ENCODE measurements at regions of chr6 and their contacts with region 1.

Region 1: DNA sequence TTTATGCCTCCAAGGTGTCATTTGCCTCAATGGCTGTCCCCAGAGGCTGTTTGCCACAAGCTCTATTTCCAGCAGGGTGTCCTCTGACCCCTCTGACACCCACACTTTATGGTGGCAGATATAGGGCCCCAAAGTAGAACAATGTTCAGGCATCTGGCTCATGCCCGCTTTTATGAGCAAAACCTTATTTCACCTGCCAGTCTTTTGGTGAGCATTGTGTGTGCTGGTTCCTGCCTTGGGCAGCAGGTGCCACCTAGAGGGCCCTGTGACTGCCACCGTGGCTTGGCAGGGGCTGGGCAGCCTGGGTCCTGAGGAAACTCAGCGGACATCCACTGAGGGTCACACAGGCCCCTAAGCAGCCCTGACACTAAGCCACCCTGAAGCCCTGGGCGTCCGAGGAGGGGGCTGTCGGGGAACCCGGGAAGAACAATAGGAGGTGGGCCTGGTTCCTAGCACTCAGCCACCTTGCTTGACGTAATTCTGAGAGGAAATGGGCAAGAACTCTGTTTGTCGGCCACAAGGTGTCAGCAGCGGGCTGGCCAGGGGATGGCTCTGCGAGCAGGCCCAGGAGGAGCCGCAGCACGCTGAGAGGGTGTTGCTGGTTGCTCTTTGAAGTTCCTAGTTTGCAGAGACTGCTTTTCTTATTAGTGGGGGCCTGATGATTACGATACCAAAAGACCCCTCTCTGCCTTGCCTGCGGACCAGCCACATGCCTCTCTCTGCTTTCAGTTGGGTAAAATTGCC is 148.9 kb downstream of the SCML4 start:
- DNase-seq: peak; percentile 45
- ATAC-seq: peak; percentile 96
- H3K4me3 ChIP-seq: no peak overlapping the region; the same call in 1 of the 2 replicates
- H3K27ac ChIP-seq: peak overlapping the region; percentile 42; the same call in 1 of the 2 replicates
- H3K4me1 ChIP-seq: peaks cover 19% of the 10 kb centered on the region
- H3K27me3 ChIP-seq: no peaks in the 10 kb centered on the region
- CTCF ChIP-seq: peak; percentile 86 to 94 (median 87)
- EP300 ChIP-seq: no peak
- POLR2A ChIP-seq: no peak
- RAD21 ChIP-seq: peak; percentile 96

Region 2: DNA sequence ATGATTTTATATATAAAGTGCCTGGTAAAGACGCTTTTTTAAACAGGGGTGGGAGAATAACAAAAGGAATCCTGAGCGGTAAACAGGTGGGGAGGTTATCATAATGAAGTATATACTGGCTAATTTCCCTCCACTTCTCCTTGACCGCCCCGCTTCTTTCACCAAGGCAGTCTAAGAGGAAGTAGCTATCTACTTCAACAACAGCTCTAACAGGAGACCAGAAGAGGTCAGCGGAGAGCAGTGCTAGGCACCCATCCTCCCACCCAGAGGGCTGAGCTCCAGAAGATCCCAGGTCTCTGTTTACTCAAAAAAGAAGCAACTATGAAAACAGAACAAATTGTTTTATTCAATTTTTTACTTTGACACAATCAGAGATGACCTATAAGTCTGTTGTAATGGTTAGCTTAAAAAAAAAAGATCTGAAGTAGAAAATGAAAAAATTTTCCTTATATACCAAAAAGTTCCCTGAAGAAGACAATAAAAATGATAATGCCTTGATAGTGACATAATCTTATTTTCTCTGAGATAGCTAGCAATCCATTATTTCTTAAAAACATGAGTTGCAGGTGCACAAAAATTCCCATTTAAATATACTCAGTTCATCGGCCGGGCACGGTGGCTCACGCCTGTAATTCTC is 356.9 kb before region 1 on chr6:
- CTCF ChIA-PET with region 1: interaction called, 47 read pairs
- POLR2A ChIA-PET with region 1: interaction called, 3 read pairs
- RAD21 ChIA-PET with region 1: interaction called, 24 read pairs
- SMC1A ChIA-PET with region 1: interaction called, 11 read pairs
- in situ Hi-C with region 1: no loop called
- intact Hi-C with region 1: loop called (anchors 1 kb)
- DNase-seq: peak; percentile 7
- ATAC-seq: peak; percentile 99
- H3K4me3 ChIP-seq: no peak overlapping the region
- H3K27ac ChIP-seq: no peak overlapping the region
- H3K4me1 ChIP-seq: no peaks in the 10 kb centered on the region
- H3K27me3 ChIP-seq: no peaks in the 10 kb centered on the region
- CTCF ChIP-seq: peak; percentile 64 to 83 (median 71)
- EP300 ChIP-seq: no peak
- POLR2A ChIP-seq: no peak
- RAD21 ChIP-seq: peak; percentile 86

Region 3: GRCh38 chr6:107576852-107577251 is 98.3 kb before region 1 on chr6:
- CTCF ChIA-PET with region 1: no interaction called
- POLR2A ChIA-PET with region 1: no interaction called
- RAD21 ChIA-PET with region 1: no interaction called
- SMC1A ChIA-PET with region 1: no interaction called
- in situ Hi-C with region 1: no loop called
- intact Hi-C with region 1: no loop called
- DNase-seq: no peak
- ATAC-seq: no peak; the same call in 1 of the 3 replicates
- H3K4me3 ChIP-seq: no peak overlapping the region
- H3K27ac ChIP-seq: no peak overlapping the region
- H3K4me1 ChIP-seq: no peaks in the 10 kb centered on the region
- H3K27me3 ChIP-seq: no peaks in the 10 kb centered on the region; a peak in 2 of 4 replicates
- CTCF ChIP-seq: no peak
- EP300 ChIP-seq: no peak
- POLR2A ChIP-seq: no peak
- RAD21 ChIP-seq: no peak

Region 4: DNA sequence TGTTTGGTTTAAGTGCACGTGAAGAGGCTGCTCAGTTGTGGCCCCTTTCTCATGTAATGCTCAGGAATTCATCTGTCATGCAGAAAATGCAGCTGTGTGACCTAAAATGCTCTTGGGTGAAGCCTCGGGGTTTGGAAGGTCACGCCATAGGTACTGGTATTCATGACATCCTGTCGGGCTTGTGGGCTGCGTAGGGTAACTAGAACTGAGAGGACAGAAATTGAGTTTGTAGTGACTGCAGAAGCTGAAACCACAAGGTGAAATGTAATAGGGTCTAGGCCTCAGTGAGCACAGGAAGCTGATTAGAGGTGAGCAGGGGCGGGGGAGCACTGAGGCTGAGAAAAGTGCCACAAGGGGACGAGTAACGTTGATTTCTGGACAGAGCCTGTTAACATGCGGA is 56.5 kb before region 1 on chr6:
- CTCF ChIA-PET with region 1: interaction called, 5 read pairs
- POLR2A ChIA-PET with region 1: interaction called, 8 read pairs
- RAD21 ChIA-PET with region 1: interaction called, 3 read pairs
- SMC1A ChIA-PET with region 1: interaction called, 3 read pairs
- in situ Hi-C with region 1: no loop called
- intact Hi-C with region 1: loop called (anchors 2 kb)
- DNase-seq: peak; percentile 86
- ATAC-seq: peak; percentile 97
- H3K4me3 ChIP-seq: no peak overlapping the region
- H3K27ac ChIP-seq: no peak overlapping the region
- H3K4me1 ChIP-seq: peaks cover 14% of the 10 kb centered on the region
- H3K27me3 ChIP-seq: peaks cover 0 to 2% of the 10 kb centered on the region in 2 experiments; a peak in 1 of 4 replicates
- CTCF ChIP-seq: no peak
- EP300 ChIP-seq: peak; percentile 22 to 34; a peak in 1 of 4 replicates
- POLR2A ChIP-seq: no peak
- RAD21 ChIP-seq: no peak

Region 5: DNA sequence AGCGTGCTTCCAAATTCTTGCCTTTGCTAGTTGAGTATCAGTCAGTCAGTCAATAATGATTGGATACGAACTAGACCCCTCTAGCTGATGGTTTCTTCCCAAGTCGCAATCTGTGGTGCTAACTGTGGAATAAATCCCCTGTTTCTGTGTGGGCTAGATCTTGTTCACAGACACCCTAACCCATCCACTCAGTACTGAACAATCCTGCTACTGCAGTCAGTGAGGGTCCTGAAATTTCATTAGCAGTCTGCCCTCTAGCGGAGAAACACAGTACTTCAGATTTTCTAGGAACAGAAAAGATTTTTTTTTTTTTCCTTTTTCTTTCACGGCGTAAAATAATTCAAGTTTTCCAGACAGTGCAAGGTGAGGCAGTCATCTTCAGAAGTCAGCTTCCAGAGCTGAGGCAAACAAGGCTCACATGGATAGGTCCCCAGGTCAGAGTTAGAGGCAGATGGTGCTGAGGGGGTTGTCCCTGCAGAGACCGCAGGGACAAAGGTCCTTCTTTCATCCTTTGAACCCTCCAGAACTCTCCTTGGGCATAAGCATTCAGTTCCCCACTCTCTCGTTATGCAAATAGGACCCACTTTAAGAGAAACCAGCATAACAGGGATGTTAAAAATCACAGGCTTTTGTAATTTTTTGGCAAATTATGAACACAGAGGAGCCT is 29.3 kb after region 1 on chr6:
- CTCF ChIA-PET with region 1: interaction called, 10 read pairs
- POLR2A ChIA-PET with region 1: no interaction called
- RAD21 ChIA-PET with region 1: interaction called, 3 read pairs
- SMC1A ChIA-PET with region 1: interaction called, 9 read pairs
- in situ Hi-C with region 1: no loop called
- intact Hi-C with region 1: loop called (anchors 1 kb)
- DNase-seq: no peak
- ATAC-seq: peak; percentile 71
- H3K4me3 ChIP-seq: no peak overlapping the region
- H3K27ac ChIP-seq: no peak overlapping the region
- H3K4me1 ChIP-seq: no peaks in the 10 kb centered on the region
- H3K27me3 ChIP-seq: no peaks in the 10 kb centered on the region
- CTCF ChIP-seq: peak; percentile 60 to 80 (median 69); a peak in 5 of 6 replicates
- EP300 ChIP-seq: no peak
- POLR2A ChIP-seq: no peak
- RAD21 ChIP-seq: peak; percentile 70

Region 6: GRCh38 chr6:108052706-108053105 is 377.5 kb after region 1 on chr6:
- CTCF ChIA-PET with region 1: interaction called, 5 read pairs
- POLR2A ChIA-PET with region 1: no interaction called
- RAD21 ChIA-PET with region 1: interaction called, 4 read pairs
- SMC1A ChIA-PET with region 1: interaction called, 6 read pairs
- in situ Hi-C with region 1: loop called (anchors 10 kb)
- intact Hi-C with region 1: loop called (anchors 1 kb)
- DNase-seq: no peak
- ATAC-seq: no peak
- H3K4me3 ChIP-seq: no peak overlapping the region
- H3K27ac ChIP-seq: no peak overlapping the region
- H3K4me1 ChIP-seq: no peaks in the 10 kb centered on the region
- H3K27me3 ChIP-seq: no peaks in the 10 kb centered on the region
- CTCF ChIP-seq: no peak
- EP300 ChIP-seq: no peak
- POLR2A ChIP-seq: no peak
- RAD21 ChIP-seq: no peak